A673 (cell line): ENCODE measurements at regions of chr15 and their contacts with region 1.

Region 1: DNA sequence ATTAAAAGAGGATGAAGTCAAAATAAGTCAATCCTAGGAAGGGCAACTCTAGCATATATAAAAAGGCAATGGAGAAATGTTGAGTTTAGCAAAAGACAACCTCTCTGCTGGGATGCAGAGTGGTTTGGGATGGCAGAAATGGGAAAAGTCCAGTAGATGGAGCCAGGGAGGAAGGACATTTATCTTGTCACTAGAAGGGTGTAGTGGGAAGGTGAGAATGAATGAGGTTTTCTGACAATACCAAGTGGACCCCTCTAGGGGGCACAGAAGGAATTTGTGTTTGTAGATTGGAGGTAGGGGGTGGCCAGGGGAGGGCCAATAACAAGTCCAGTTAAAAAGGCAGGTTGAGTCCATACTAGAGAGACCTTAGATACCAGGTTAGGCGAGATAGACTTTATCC is 80.0 kb downstream of the THSD4 start:
- DNase-seq: peak; percentile 40
- H3K4me3 ChIP-seq: no peak overlapping the region
- H3K27ac ChIP-seq: no peak overlapping the region
- H3K4me1 ChIP-seq: no peaks in the 10 kb centered on the region
- H3K27me3 ChIP-seq: no peaks in the 10 kb centered on the region
- CTCF ChIP-seq: peak; percentile 54

Region 2: GRCh38 chr15:71244250-71244649 is 49.0 kb after region 1 on chr15:
- CTCF ChIA-PET with region 1: no interaction called
- POLR2A ChIA-PET with region 1: interaction called, 13 read pairs
- intact Hi-C with region 1: no loop called
- DNase-seq: no peak
- H3K4me3 ChIP-seq: no peak overlapping the region
- H3K27ac ChIP-seq: no peak overlapping the region
- H3K4me1 ChIP-seq: no peaks in the 10 kb centered on the region
- H3K27me3 ChIP-seq: no peaks in the 10 kb centered on the region
- CTCF ChIP-seq: no peak

Region 3: GRCh38 chr15:72706266-72706665 is 1511.0 kb after region 1 on chr15:
- CTCF ChIA-PET with region 1: no interaction called
- POLR2A ChIA-PET with region 1: no interaction called
- intact Hi-C with region 1: no loop called
- DNase-seq: peak; percentile 5
- H3K4me3 ChIP-seq: no peak overlapping the region
- H3K27ac ChIP-seq: no peak overlapping the region
- H3K4me1 ChIP-seq: no peaks in the 10 kb centered on the region
- H3K27me3 ChIP-seq: no peaks in the 10 kb centered on the region
- CTCF ChIP-seq: no peak